WTC11 (cell line): ENCODE measurements at regions of chr12 and their contacts with region 1.

Region 1: DNA sequence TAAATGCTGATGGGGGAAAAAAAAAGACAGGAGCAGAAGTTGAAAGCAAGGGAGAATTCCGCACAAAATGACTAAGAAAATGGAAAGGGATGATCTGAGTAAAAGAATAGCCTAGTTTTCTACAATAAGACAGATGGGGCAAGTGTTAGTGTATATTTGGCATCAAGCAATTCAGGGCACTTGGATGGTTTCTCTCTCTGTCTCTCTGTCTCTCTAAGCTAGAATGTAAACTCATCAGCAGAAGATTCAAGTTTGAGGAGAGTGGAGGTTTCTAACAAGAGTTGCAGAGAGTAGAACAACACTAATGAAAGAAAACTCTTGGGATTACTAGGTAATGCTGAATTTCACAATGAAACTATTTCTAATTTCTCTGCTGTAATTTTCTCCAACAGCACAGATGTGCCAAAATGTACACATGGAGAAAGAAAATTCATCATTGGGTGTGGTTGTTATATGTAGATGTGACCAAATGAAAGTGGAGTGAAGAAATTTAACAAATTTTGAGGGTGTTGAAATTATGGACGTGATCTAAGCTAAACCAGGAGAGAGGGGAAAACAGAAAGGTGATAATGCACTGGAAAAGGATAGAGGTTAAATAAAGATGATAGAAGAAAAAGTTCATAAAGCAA is 237.1 kb downstream of the ACSS3 start:
- DNase-seq: no peak
- ATAC-seq: no peak
- H3K4me3 Mint-ChIP-seq: no peak overlapping the region
- H3K27ac Mint-ChIP-seq: no peak overlapping the region
- H3K4me1 Mint-ChIP-seq: no peaks in the 10 kb centered on the region
- H3K27me3 Mint-ChIP-seq: no peaks in the 10 kb centered on the region
- CTCF ChIP-seq: no peak

Region 2: GRCh38 chr12:81296556-81297305 is 18.3 kb before region 1 on chr12:
- CTCF ChIA-PET with region 1: no interaction called
- POLR2A ChIA-PET with region 1: no interaction called
- DNase-seq: no peak
- ATAC-seq: no peak
- H3K4me3 Mint-ChIP-seq: no peak overlapping the region
- H3K27ac Mint-ChIP-seq: no peak overlapping the region
- H3K4me1 Mint-ChIP-seq: no peaks in the 10 kb centered on the region
- H3K27me3 Mint-ChIP-seq: no peaks in the 10 kb centered on the region
- CTCF ChIP-seq: no peak

Region 3: GRCh38 chr12:81329085-81329484 is 14.1 kb after region 1 on chr12:
- CTCF ChIA-PET with region 1: interaction called, 13 read pairs
- POLR2A ChIA-PET with region 1: no interaction called
- DNase-seq: peak; percentile 55
- ATAC-seq: peak; percentile 90
- H3K4me3 Mint-ChIP-seq: no peak overlapping the region
- H3K27ac Mint-ChIP-seq: no peak overlapping the region
- H3K4me1 Mint-ChIP-seq: peaks cover 5% of the 10 kb centered on the region
- H3K27me3 Mint-ChIP-seq: no peaks in the 10 kb centered on the region
- CTCF ChIP-seq: peak; percentile 81

Region 4: GRCh38 chr12:81340910-81341309 is 25.9 kb after region 1 on chr12:
- CTCF ChIA-PET with region 1: no interaction called
- POLR2A ChIA-PET with region 1: no interaction called
- DNase-seq: no peak
- ATAC-seq: no peak
- H3K4me3 Mint-ChIP-seq: no peak overlapping the region
- H3K27ac Mint-ChIP-seq: no peak overlapping the region
- H3K4me1 Mint-ChIP-seq: no peaks in the 10 kb centered on the region
- H3K27me3 Mint-ChIP-seq: no peaks in the 10 kb centered on the region
- CTCF ChIP-seq: no peak